A673 (cell line): ENCODE measurements at regions of chr19 and their contacts with region 1.

Region 1: GRCh38 chr19:10388957-10389356 is 8.6 kb upstream of the TYK2 start:
- DNase-seq: peak; percentile 86
- H3K4me3 ChIP-seq: no peak overlapping the region
- H3K27ac ChIP-seq: no peak overlapping the region
- H3K4me1 ChIP-seq: no peaks in the 10 kb centered on the region
- H3K27me3 ChIP-seq: no peaks in the 10 kb centered on the region
- CTCF ChIP-seq: peak; percentile 97

Region 2: DNA sequence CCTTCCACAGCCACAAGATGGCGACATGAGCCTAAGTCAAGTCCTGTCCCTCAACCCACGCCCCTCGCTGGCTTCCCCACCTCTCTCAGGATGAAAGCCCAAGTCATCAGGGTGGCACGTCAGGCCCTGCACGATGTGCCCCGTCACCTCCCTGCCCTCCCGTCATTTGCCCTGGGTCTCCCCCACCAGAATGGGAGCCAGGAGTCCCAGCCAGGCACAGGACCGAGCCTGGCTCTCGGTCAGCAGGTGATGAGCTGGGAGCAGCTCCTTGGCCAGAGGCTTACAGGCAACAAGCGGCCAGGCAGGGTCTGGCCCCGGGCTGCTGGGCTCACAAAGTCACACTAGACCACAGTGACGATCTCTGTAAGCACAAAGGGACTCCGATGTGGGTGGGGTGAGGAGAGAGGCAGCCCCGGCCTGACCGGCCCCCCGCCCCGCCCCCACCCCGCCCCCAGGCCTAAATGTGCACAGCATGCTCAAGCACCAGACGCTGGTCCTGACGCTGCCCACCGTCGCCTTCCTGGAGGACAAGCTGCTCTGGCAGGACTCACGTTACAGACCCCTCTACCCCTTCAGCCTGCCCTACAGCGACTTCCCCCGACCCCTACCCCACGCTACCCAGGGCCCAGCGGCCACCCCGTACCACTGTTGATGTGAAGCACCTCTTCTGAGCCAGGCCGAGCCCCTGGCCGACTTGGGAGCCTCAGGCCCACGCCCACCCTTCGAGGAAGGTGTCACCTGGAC is 129.6 kb before region 1 on chr19:
- CTCF ChIA-PET with region 1: interaction called, 38 read pairs
- POLR2A ChIA-PET with region 1: interaction called, 11 read pairs
- intact Hi-C with region 1: loop called (anchors 1 kb)
- DNase-seq: peak; percentile 94
- H3K4me3 ChIP-seq: no peak overlapping the region
- H3K27ac ChIP-seq: no peak overlapping the region
- H3K4me1 ChIP-seq: no peaks in the 10 kb centered on the region
- H3K27me3 ChIP-seq: no peaks in the 10 kb centered on the region
- CTCF ChIP-seq: peak; percentile 87

Region 3: DNA sequence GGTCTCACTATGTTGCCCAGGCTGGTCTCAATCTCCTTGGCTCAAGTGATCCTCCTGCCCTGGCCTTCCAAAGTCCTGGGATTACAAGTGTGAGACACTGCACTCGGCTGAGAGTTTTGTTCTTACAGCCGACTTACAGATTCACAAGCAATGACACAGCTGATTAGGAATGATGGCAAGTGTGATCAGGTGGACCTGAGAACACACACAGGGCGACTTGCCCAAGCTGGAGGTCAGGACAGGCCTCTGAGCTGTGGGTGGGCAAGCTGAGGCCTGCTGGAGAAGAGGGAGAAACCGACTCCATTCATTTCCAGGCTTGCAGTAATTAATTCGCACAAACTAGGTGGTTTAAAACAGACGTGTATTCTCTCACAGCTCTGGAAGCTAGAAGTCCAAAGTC is 146.7 kb after region 1 on chr19:
- CTCF ChIA-PET with region 1: no interaction called
- POLR2A ChIA-PET with region 1: no interaction called
- intact Hi-C with region 1: no loop called
- DNase-seq: no peak
- H3K4me3 ChIP-seq: no peak overlapping the region
- H3K27ac ChIP-seq: no peak overlapping the region
- H3K4me1 ChIP-seq: no peaks in the 10 kb centered on the region
- H3K27me3 ChIP-seq: no peaks in the 10 kb centered on the region
- CTCF ChIP-seq: no peak